Naive thymus-derived CD4-positive, alpha-beta T cell (primary cell): ENCODE measurements at regions of chr3 and their contacts with region 1.

Region 1: GRCh38 chr3:129893581-129894070 is at the start of gene TMCC1:
- DNase-seq: peak; percentile 89 to 95 (median 93)
- ATAC-seq: peak; percentile 97
- H3K4me3 ChIP-seq: peak within 1 kb of the TSS; percentile 80
- H3K4me3 Mint-ChIP-seq: peak within 1 kb of the TSS; percentile 85 to 95 (median 94)
- H3K27ac ChIP-seq: peak within 1 kb of the TSS; percentile 94
- H3K27ac Mint-ChIP-seq: peak within 1 kb of the TSS; percentile 77 to 97 (median 92)
- H3K4me1 ChIP-seq: peaks cover 18 to 32% of the 10 kb centered on the region in 2 donors
- H3K4me1 Mint-ChIP-seq: peaks cover 32 to 50% (median 46%) of the 10 kb centered on the region in 7 donors
- H3K27me3 ChIP-seq: no peaks in the 10 kb centered on the region
- H3K27me3 Mint-ChIP-seq: peaks cover 0 to 3% (median 0%) of the 10 kb centered on the region in 5 donors
- total RNA-seq, gene TMCC1: 20.5 to 39.4 (median 36.5) TPM

Region 2: GRCh38 chr3:128153156-128154041 is 1740.2 kb before region 1 on chr3 and contains the start of gene EEFSEC:
- CTCF ChIA-PET with region 1: no interaction called
- POLR2A ChIA-PET with region 1: no interaction called
- intact Hi-C with region 1: loop called (anchors 2 to 5 kb)
- DNase-seq: peak; percentile 75 to 93 (median 82)
- ATAC-seq: peak; percentile 95
- H3K4me3 ChIP-seq: peak within 1 kb of the TSS; percentile 79
- H3K4me3 Mint-ChIP-seq: peak within 1 kb of the TSS; percentile 84 to 98 (median 94)
- H3K27ac ChIP-seq: peak within 1 kb of the TSS; percentile 77
- H3K27ac Mint-ChIP-seq: peak within 1 kb of the TSS; percentile 85 to 98 (median 95)
- H3K4me1 ChIP-seq: peaks cover 13% of the 10 kb centered on the region in 2 donors
- H3K4me1 Mint-ChIP-seq: peaks cover 16 to 59% (median 47%) of the 10 kb centered on the region in 7 donors
- H3K27me3 ChIP-seq: no peaks in the 10 kb centered on the region
- H3K27me3 Mint-ChIP-seq: no peaks in the 10 kb centered on the region
- total RNA-seq, gene EEFSEC: 17.3 to 18.5 (median 17.9) TPM

Region 3: DNA sequence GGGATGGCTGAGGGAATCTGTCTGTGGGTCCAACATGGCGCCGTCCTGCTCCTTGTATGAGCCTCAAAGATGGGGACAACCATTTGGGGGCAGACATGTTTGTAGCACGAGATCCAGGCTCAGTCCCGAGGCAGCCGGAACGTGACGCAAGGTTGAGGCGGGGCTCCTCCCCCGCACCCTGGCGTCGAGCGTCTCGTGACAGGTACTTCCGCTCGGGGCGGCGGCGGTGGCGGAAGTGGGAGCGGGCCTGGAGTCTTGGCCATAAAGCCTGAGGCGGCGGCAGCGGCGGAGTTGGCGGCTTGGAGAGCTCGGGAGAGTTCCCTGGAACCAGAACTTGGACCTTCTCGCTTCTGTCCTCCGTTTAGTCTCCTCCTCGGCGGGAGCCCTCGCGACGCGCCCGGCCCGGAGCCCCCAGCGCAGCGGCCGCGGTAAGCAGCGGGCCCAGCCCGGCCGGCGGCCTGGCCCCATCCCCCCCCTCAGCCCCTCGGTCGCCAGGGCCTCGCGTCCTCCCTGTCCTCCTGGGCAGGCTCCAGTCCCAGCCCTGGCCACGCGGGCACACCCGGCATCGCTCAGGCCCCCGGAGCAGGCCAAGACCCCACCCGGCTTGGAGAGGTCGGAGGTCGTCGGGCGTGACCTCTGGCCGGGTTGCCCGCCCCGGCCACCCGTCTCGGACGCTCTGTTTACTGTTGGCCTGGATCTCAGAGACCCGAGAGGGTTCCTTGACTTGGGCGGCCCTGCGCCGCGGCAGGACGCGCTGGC is 1167.5 kb before region 1 on chr3 and contains the start of gene RAB7A:
- CTCF ChIA-PET with region 1: no interaction called
- POLR2A ChIA-PET with region 1: no interaction called
- intact Hi-C with region 1: loop called in 1 of 2 experiments (anchors 5 kb)
- DNase-seq: peak; percentile 92 to 97 (median 97)
- ATAC-seq: peak; percentile 98
- H3K4me3 ChIP-seq: peak within 1 kb of the TSS; percentile 57
- H3K4me3 Mint-ChIP-seq: peak within 1 kb of the TSS; percentile 89 to 98 (median 96)
- H3K27ac ChIP-seq: peak within 1 kb of the TSS; percentile 100
- H3K27ac Mint-ChIP-seq: peak within 1 kb of the TSS; percentile 92 to 98 (median 95)
- H3K4me1 ChIP-seq: peaks cover 32 to 38% of the 10 kb centered on the region in 2 donors
- H3K4me1 Mint-ChIP-seq: peaks cover 49 to 64% (median 60%) of the 10 kb centered on the region in 7 donors
- H3K27me3 ChIP-seq: no peaks in the 10 kb centered on the region
- H3K27me3 Mint-ChIP-seq: peaks cover 0 to 3% (median 0%) of the 10 kb centered on the region in 5 donors
- total RNA-seq, gene RAB7A: 124 to 249 (median 172) TPM

Region 4: GRCh38 chr3:129399145-129399894 is 494.3 kb before region 1 on chr3:
- CTCF ChIA-PET with region 1: no interaction called
- POLR2A ChIA-PET with region 1: no interaction called
- intact Hi-C with region 1: loop called in 1 of 2 experiments (anchors 1 kb)
- DNase-seq: peak; percentile 34 to 89 (median 81)
- ATAC-seq: peak; percentile 91
- H3K4me3 ChIP-seq: peak overlapping the region; percentile 70
- H3K4me3 Mint-ChIP-seq: peak overlapping the region; percentile 89 to 100 (median 97)
- H3K27ac ChIP-seq: peak overlapping the region; percentile 88
- H3K27ac Mint-ChIP-seq: peak overlapping the region; percentile 94 to 100 (median 98)
- H3K4me1 ChIP-seq: peaks cover 10 to 13% of the 10 kb centered on the region in 2 donors
- H3K4me1 Mint-ChIP-seq: peaks cover 23 to 47% (median 37%) of the 10 kb centered on the region in 7 donors
- H3K27me3 ChIP-seq: no peaks in the 10 kb centered on the region
- H3K27me3 Mint-ChIP-seq: no peaks in the 10 kb centered on the region

Region 5: GRCh38 chr3:129627429-129628168 is 266.0 kb before region 1 on chr3:
- CTCF ChIA-PET with region 1: interaction called, 4 read pairs
- POLR2A ChIA-PET with region 1: interaction called, 3 read pairs
- intact Hi-C with region 1: loop called (anchors 1 to 2 kb)
- DNase-seq: peak in 8 of 9 donors; percentile 43 to 77 (median 70)
- ATAC-seq: peak; percentile 78
- H3K4me3 ChIP-seq: peak overlapping the region; percentile 67
- H3K4me3 Mint-ChIP-seq: peak overlapping the region; percentile 87 to 93 (median 90)
- H3K27ac ChIP-seq: peak overlapping the region; percentile 51
- H3K27ac Mint-ChIP-seq: peak overlapping the region in 8 of 9 donors; percentile 2 to 86 (median 82)
- H3K4me1 ChIP-seq: peaks cover 5 to 9% of the 10 kb centered on the region in 2 donors
- H3K4me1 Mint-ChIP-seq: peaks cover 5 to 25% (median 17%) of the 10 kb centered on the region in 7 donors
- H3K27me3 ChIP-seq: no peaks in the 10 kb centered on the region
- H3K27me3 Mint-ChIP-seq: peaks cover 0 to 2% (median 0%) of the 10 kb centered on the region in 5 donors

Region 6: GRCh38 chr3:129934234-129935123 is 40.9 kb after region 1 on chr3:
- CTCF ChIA-PET with region 1: no interaction called
- POLR2A ChIA-PET with region 1: no interaction called
- intact Hi-C with region 1: loop called (anchors 1 to 2 kb)
- DNase-seq: peak in 6 of 9 donors; percentile 18 to 46 (median 26)
- ATAC-seq: peak; percentile 66
- H3K4me3 ChIP-seq: no peak overlapping the region
- H3K4me3 Mint-ChIP-seq: peak overlapping the region in 4 of 10 donors; percentile 10 to 67 (median 27)
- H3K27ac ChIP-seq: no peak overlapping the region
- H3K27ac Mint-ChIP-seq: no peak overlapping the region
- H3K4me1 ChIP-seq: peaks cover 0 to 3% of the 10 kb centered on the region in 2 donors
- H3K4me1 Mint-ChIP-seq: peaks cover 4 to 10% (median 7%) of the 10 kb centered on the region in 7 donors
- H3K27me3 ChIP-seq: no peaks in the 10 kb centered on the region
- H3K27me3 Mint-ChIP-seq: peaks cover 3 to 16% (median 4%) of the 10 kb centered on the region in 5 donors

Region 7: GRCh38 chr3:130746246-130747039 is 852.8 kb after region 1 on chr3 and contains the start of gene PIK3R4:
- CTCF ChIA-PET with region 1: no interaction called
- POLR2A ChIA-PET with region 1: no interaction called
- intact Hi-C with region 1: loop called in 1 of 2 experiments (anchors 2 kb)
- DNase-seq: peak; percentile 79 to 98 (median 92)
- ATAC-seq: peak; percentile 87
- H3K4me3 ChIP-seq: peak within 1 kb of the TSS; percentile 87
- H3K4me3 Mint-ChIP-seq: peak within 1 kb of the TSS in 9 of 10 donors; percentile 82 to 97 (median 93)
- H3K27ac ChIP-seq: peak within 1 kb of the TSS; percentile 89
- H3K27ac Mint-ChIP-seq: peak within 1 kb of the TSS; percentile 89 to 99 (median 94)
- H3K4me1 ChIP-seq: peaks cover 5 to 20% of the 10 kb centered on the region in 2 donors
- H3K4me1 Mint-ChIP-seq: peaks cover 35 to 62% (median 50%) of the 10 kb centered on the region in 7 donors
- H3K27me3 ChIP-seq: no peaks in the 10 kb centered on the region
- H3K27me3 Mint-ChIP-seq: peaks cover 0 to 3% (median 0%) of the 10 kb centered on the region in 5 donors
- total RNA-seq, gene PIK3R4: 15.5 to 33.6 (median 27.3) TPM